CD4-positive, alpha-beta T cell (primary cell): ENCODE measurements at regions of chr10 and their contacts with region 1.

Region 1: GRCh38 chr10:48363617-48364355 is 57.3 kb downstream of the MAPK8 start:
- DNase-seq: peak in 9 of 14 experiments; percentile 2 to 62 (median 21)
- ATAC-seq: no peak
- H3K4me3 ChIP-seq: no peak overlapping the region
- H3K4me3 Mint-ChIP-seq: no peak overlapping the region
- H3K27ac ChIP-seq: no peak overlapping the region
- H3K27ac Mint-ChIP-seq: no peak overlapping the region
- H3K4me1 ChIP-seq: no peaks in the 10 kb centered on the region
- H3K4me1 Mint-ChIP-seq: peaks cover 50% of the 10 kb centered on the region
- H3K27me3 ChIP-seq: no peaks in the 10 kb centered on the region
- H3K27me3 Mint-ChIP-seq: no peaks in the 10 kb centered on the region
- CTCF ChIP-seq: peak; percentile 77

Region 2: GRCh38 chr10:48306265-48306869 is 57.4 kb before region 1 on chr10 and contains the start of gene MAPK8:
- CTCF ChIA-PET with region 1: no interaction called
- POLR2A ChIA-PET with region 1: no interaction called
- intact Hi-C with region 1: loop called in 1 of 2 experiments (anchors 10 kb)
- DNase-seq: peak; percentile 86 to 98 (median 90)
- ATAC-seq: peak; percentile 88
- H3K4me3 ChIP-seq: peak within 1 kb of the TSS; percentile 57
- H3K4me3 Mint-ChIP-seq: peak within 1 kb of the TSS; percentile 91
- H3K27ac ChIP-seq: peak within 1 kb of the TSS; percentile 65 to 86
- H3K27ac Mint-ChIP-seq: peak within 1 kb of the TSS; percentile 93
- H3K4me1 ChIP-seq: peaks cover 15% of the 10 kb centered on the region
- H3K4me1 Mint-ChIP-seq: peaks cover 40% of the 10 kb centered on the region
- H3K27me3 ChIP-seq: no peaks in the 10 kb centered on the region
- H3K27me3 Mint-ChIP-seq: no peaks in the 10 kb centered on the region
- CTCF ChIP-seq: no peak
- total RNA-seq, gene MAPK8: 47.8 to 50.6 TPM

Region 3: DNA sequence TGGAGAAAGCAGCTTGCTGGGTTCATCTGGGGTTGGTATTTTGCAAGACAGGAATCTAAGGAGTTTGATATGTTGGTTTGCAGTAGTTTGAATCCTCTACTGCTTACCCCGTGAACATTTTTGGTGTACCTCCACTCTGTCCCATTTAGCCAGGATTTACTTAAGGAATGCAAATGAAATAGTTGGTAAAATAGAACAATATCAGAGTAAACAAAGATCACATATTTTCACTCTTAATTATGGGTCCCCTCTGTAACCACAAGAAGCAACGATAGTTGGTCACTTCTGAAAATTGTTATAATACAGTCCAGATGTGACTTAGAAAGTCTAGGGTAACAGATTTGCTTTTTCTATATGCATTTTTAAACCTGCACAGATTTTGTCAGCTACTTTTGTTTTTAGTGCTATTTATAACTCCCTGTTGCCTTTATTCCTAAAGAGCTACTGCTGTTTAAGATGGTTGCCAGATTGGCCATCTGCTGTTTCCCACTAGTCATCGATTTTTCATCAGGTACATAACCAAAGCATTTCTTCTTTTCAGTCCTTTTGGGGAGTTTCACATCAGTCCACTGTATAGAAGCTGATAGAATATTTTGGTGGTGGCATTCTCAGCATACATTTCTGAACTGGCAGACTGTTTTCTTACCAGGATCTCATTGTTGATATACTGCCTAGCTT is 19.7 kb before region 1 on chr10:
- CTCF ChIA-PET with region 1: no interaction called
- POLR2A ChIA-PET with region 1: no interaction called
- intact Hi-C with region 1: no loop called
- DNase-seq: no peak
- ATAC-seq: no peak
- H3K4me3 ChIP-seq: no peak overlapping the region
- H3K4me3 Mint-ChIP-seq: no peak overlapping the region
- H3K27ac ChIP-seq: no peak overlapping the region
- H3K27ac Mint-ChIP-seq: no peak overlapping the region
- H3K4me1 ChIP-seq: no peaks in the 10 kb centered on the region
- H3K4me1 Mint-ChIP-seq: peaks cover 33% of the 10 kb centered on the region
- H3K27me3 ChIP-seq: no peaks in the 10 kb centered on the region
- H3K27me3 Mint-ChIP-seq: no peaks in the 10 kb centered on the region
- CTCF ChIP-seq: no peak

Region 4: DNA sequence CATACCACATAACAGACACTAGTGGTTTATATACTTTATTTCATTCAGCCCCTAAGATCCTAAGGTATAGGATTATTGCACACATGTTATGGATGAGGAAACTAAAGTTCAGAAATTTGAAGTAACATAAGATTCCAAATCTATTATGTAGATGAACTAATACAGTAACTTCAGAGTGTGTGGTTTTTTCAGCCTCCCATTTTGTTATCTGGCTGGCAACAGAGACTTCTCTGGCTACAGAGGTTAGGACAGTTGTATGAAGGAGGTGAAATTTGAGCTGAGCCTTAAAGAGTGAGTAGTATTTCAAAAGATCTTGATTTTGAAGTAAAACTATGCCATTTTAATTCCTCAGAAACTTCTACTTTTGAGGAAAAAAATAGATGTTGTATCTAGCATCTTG is 68.1 kb after region 1 on chr10:
- CTCF ChIA-PET with region 1: no interaction called
- POLR2A ChIA-PET with region 1: no interaction called
- intact Hi-C with region 1: no loop called
- DNase-seq: no peak
- ATAC-seq: no peak
- H3K4me3 ChIP-seq: no peak overlapping the region
- H3K4me3 Mint-ChIP-seq: no peak overlapping the region
- H3K27ac ChIP-seq: no peak overlapping the region
- H3K27ac Mint-ChIP-seq: no peak overlapping the region
- H3K4me1 ChIP-seq: no peaks in the 10 kb centered on the region
- H3K4me1 Mint-ChIP-seq: no peaks in the 10 kb centered on the region
- H3K27me3 ChIP-seq: no peaks in the 10 kb centered on the region
- H3K27me3 Mint-ChIP-seq: no peaks in the 10 kb centered on the region
- CTCF ChIP-seq: no peak

Region 5: GRCh38 chr10:48506147-48506917 is 142.5 kb after region 1 on chr10:
- CTCF ChIA-PET with region 1: no interaction called
- POLR2A ChIA-PET with region 1: no interaction called
- intact Hi-C with region 1: loop called in 1 of 2 experiments (anchors 5 kb)
- DNase-seq: peak in 1 of 14 experiments; percentile 24
- ATAC-seq: no peak
- H3K4me3 ChIP-seq: no peak overlapping the region
- H3K4me3 Mint-ChIP-seq: no peak overlapping the region
- H3K27ac ChIP-seq: no peak overlapping the region
- H3K27ac Mint-ChIP-seq: no peak overlapping the region
- H3K4me1 ChIP-seq: peaks cover 4% of the 10 kb centered on the region
- H3K4me1 Mint-ChIP-seq: no peaks in the 10 kb centered on the region
- H3K27me3 ChIP-seq: no peaks in the 10 kb centered on the region
- H3K27me3 Mint-ChIP-seq: no peaks in the 10 kb centered on the region
- CTCF ChIP-seq: no peak

Region 6: DNA sequence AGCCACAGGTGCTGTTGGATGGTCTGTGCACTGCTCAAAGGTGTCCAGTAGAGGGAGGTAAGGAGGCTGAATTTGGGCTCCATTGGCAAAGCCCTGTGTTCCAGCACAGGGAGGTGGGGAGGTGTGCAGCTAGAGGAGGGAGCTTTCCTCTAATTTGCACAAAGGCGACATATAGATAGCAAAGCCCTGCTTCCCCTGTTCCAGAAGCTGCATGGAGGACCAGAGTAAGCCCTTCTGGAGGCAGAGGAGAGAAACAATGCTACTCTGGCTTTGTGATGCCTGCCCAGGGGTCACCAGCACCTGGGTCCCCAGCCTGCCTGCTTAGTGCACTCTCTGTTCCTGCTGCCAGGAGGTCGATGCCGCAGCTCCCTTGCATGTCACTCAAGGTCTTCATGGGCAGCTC is 244.5 kb after region 1 on chr10:
- CTCF ChIA-PET with region 1: no interaction called
- POLR2A ChIA-PET with region 1: no interaction called
- intact Hi-C with region 1: loop called in 1 of 2 experiments (anchors 5 kb)
- DNase-seq: peak in 4 of 14 experiments; percentile 10 to 52 (median 35)
- ATAC-seq: no peak
- H3K4me3 ChIP-seq: no peak overlapping the region
- H3K4me3 Mint-ChIP-seq: no peak overlapping the region
- H3K27ac ChIP-seq: no peak overlapping the region
- H3K27ac Mint-ChIP-seq: no peak overlapping the region
- H3K4me1 ChIP-seq: peaks cover 6% of the 10 kb centered on the region
- H3K4me1 Mint-ChIP-seq: no peaks in the 10 kb centered on the region
- H3K27me3 ChIP-seq: peaks cover 19 to 34% of the 10 kb centered on the region in 2 experiments
- H3K27me3 Mint-ChIP-seq: peaks cover 71% of the 10 kb centered on the region
- CTCF ChIP-seq: peak; percentile 56

Region 7: DNA sequence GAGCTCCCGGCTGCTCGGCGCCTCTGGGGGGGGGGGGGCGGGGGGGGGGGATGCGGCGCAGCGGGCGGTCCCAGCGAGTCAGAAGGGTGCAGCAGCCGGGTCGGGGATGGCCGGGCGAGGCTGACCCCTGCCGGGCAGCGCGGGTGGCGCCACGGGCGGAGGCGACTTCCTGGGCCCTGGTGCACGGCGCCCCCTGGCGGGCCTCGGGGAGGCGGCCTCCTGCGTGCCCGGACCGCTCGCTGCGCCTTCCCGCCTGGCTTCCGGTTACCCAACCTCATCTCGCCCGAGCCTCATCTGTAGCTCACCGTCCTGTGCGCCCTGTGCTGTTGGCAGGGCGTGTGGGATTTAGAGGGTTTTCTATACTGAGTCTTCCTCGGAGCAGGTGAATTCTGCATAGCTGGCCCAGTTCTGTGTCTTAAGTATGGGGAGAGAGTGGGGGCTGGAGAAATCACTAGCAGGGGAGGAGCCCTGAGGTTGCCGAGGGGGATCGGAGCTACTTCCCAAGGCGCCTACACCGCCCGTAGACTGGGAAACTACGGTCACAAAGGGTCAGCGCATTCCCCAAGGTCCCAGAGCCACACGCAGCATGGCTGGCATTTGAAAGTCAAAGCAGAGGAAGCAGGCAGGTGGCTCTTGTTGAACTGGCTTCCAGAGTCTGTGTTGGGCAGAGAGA is 292.6 kb after region 1 on chr10:
- CTCF ChIA-PET with region 1: interaction called, 3 read pairs
- POLR2A ChIA-PET with region 1: interaction called, 3 read pairs
- intact Hi-C with region 1: loop called in 1 of 2 experiments (anchors 1 kb)
- DNase-seq: peak; percentile 64 to 93 (median 78)
- ATAC-seq: peak; percentile 92
- H3K4me3 ChIP-seq: peak overlapping the region; percentile 49
- H3K4me3 Mint-ChIP-seq: peak overlapping the region; percentile 76
- H3K27ac ChIP-seq: no peak overlapping the region
- H3K27ac Mint-ChIP-seq: no peak overlapping the region
- H3K4me1 ChIP-seq: peaks cover 19% of the 10 kb centered on the region
- H3K4me1 Mint-ChIP-seq: peaks cover 5% of the 10 kb centered on the region
- H3K27me3 ChIP-seq: peaks cover 7 to 10% of the 10 kb centered on the region in 2 experiments
- H3K27me3 Mint-ChIP-seq: peaks cover 33% of the 10 kb centered on the region
- CTCF ChIP-seq: peak; percentile 83

Region 8: DNA sequence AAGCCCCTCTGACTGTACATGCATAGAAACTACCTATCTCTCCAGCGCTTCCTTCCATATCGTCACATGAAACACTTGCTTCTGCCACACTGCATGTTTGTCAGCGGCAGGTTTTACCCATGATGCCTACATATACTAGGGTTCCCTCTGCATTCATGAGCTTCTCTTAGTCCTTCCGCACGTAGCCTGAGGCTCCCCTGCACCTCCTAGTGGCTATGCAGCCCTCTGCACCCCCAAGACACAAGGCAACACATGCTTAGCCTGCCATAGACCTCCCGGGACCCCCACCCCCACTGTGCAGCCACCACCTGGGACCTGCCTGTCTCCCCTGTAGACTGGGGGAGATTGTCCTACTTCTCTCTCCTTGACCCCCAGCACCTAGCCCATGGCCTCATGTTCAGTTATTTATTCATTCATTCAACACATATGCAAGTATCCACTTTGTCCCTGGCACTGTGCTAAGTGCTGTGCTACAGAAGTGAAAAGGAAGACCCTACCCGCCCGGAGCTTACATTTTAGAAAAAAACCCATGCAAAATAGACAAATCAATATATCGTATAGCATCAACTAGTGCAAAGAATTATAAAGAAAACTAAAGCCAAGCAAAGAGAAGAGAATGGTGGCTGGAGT is 800.9 kb after region 1 on chr10:
- CTCF ChIA-PET with region 1: no interaction called
- POLR2A ChIA-PET with region 1: no interaction called
- intact Hi-C with region 1: loop called in 1 of 2 experiments (anchors 10 kb)
- DNase-seq: peak in 9 of 14 experiments; percentile 11 to 54 (median 27)
- ATAC-seq: peak; percentile 78
- H3K4me3 ChIP-seq: no peak overlapping the region
- H3K4me3 Mint-ChIP-seq: no peak overlapping the region
- H3K27ac ChIP-seq: no peak overlapping the region
- H3K27ac Mint-ChIP-seq: no peak overlapping the region
- H3K4me1 ChIP-seq: peaks cover 2% of the 10 kb centered on the region
- H3K4me1 Mint-ChIP-seq: peaks cover 7% of the 10 kb centered on the region
- H3K27me3 ChIP-seq: no peaks in the 10 kb centered on the region
- H3K27me3 Mint-ChIP-seq: no peaks in the 10 kb centered on the region
- CTCF ChIP-seq: no peak

Region 9: GRCh38 chr10:49518982-49519578 is 1155.3 kb after region 1 on chr10:
- CTCF ChIA-PET with region 1: no interaction called
- POLR2A ChIA-PET with region 1: no interaction called
- intact Hi-C with region 1: loop called in 1 of 2 experiments (anchors 10 kb)
- DNase-seq: peak in 5 of 14 experiments; percentile 10 to 68 (median 50)
- ATAC-seq: no peak
- H3K4me3 ChIP-seq: no peak overlapping the region
- H3K4me3 Mint-ChIP-seq: no peak overlapping the region
- H3K27ac ChIP-seq: no peak overlapping the region
- H3K27ac Mint-ChIP-seq: no peak overlapping the region
- H3K4me1 ChIP-seq: no peaks in the 10 kb centered on the region
- H3K4me1 Mint-ChIP-seq: peaks cover 5% of the 10 kb centered on the region
- H3K27me3 ChIP-seq: no peaks in the 10 kb centered on the region
- H3K27me3 Mint-ChIP-seq: peaks cover 3% of the 10 kb centered on the region
- CTCF ChIP-seq: peak; percentile 70